ENCODE measurements at regions of chr19 and their contacts with region 1.

Region 1: GRCh38 chr19:39119554-39120229 is 5.9 kb upstream of the PAK4 start:
- DNase-seq: no peak
- ATAC-seq: no peak
- H3K4me3 ChIP-seq: no peak overlapping the region
- H3K27ac ChIP-seq: peak overlapping the region in 1 of 2 experiments; percentile 53; a peak in 4 of 6 replicates
- H3K4me1 ChIP-seq: peaks cover 19% of the 10 kb centered on the region
- CTCF ChIP-seq: no peak
- EP300 ChIP-seq: no peak
- POLR2A ChIP-seq: no peak
- RAD21 ChIP-seq: no peak

Region 2: GRCh38 chr19:39007091-39007490 is 112.6 kb before region 1 on chr19:
- CTCF ChIA-PET with region 1: no interaction called
- POLR2A ChIA-PET with region 1: no interaction called
- DNase-seq: no peak
- ATAC-seq: peak; percentile 36 to 45; a peak in 4 of 6 replicates
- H3K4me3 ChIP-seq: no peak overlapping the region
- H3K27ac ChIP-seq: no peak overlapping the region
- H3K4me1 ChIP-seq: no peaks in the 10 kb centered on the region
- CTCF ChIP-seq: no peak
- EP300 ChIP-seq: no peak
- POLR2A ChIP-seq: no peak
- RAD21 ChIP-seq: no peak

Region 3: GRCh38 chr19:39131235-39131755 is 11.6 kb after region 1 on chr19:
- CTCF ChIA-PET with region 1: interaction called, 224 read pairs
- POLR2A ChIA-PET with region 1: interaction called, 11 read pairs
- DNase-seq: no peak
- ATAC-seq: no peak
- H3K4me3 ChIP-seq: no peak overlapping the region
- H3K27ac ChIP-seq: 0 out of 6 replicates have a peak overlapping the region, but pooled peaks of 1 of the 2 experiments have one; percentile 3
- H3K4me1 ChIP-seq: peaks cover 46% of the 10 kb centered on the region
- CTCF ChIP-seq: no peak
- EP300 ChIP-seq: no peak
- POLR2A ChIP-seq: no peak
- RAD21 ChIP-seq: no peak

Region 4: DNA sequence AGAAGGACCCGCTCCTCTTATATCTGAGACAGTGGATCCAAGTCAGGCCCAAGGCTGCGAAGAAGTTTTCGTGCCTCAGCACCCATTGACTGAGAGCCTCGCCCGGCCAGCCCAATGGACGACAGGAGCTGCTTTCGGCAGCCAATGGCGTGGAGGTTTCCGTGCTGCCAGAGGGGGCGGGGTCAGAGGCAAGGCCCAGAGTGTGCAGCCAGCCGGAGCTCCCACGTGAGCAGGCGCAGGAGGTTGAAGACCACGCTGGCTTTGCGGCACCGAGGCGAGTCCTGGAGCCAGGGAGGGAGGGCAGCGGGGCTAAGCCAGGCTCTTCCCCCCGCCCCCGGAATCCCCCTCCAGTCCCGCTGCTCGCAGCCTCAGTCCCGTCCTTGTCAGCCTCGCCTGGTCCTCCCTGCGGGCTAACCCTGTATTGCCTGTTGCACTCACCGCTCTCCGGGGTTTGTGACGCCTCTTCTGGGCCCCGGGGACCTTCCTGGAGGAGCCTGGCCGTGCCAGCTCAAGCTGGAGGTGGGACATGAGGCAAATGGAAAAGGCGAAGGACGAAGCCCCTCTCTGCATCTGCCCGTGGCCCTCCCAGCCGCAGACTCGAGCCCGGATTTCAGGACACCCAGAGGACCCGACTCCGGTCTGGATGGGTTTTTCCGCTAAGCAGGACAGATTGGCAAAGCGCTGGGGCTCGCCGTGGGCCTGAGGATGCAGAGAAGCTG is 127.4 kb after region 1 on chr19:
- CTCF ChIA-PET with region 1: no interaction called
- POLR2A ChIA-PET with region 1: no interaction called
- DNase-seq: no peak
- ATAC-seq: peak in 1 of 2 experiments; percentile 36; a peak in 3 of 6 replicates
- H3K4me3 ChIP-seq: no peak overlapping the region
- H3K27ac ChIP-seq: no peak overlapping the region
- H3K4me1 ChIP-seq: no peaks in the 10 kb centered on the region
- CTCF ChIP-seq: no peak
- EP300 ChIP-seq: no peak
- POLR2A ChIP-seq: no peak
- RAD21 ChIP-seq: no peak

Measured in A549 (cell line).